ENCODE measurements at regions of chr6 and their contacts with region 1.

Region 1: GRCh38 chr6:136365776-136366354 is 76.2 kb upstream of the BCLAF1 start:
- DNase-seq: peak; percentile 86

Region 2: GRCh38 chr6:136226027-136226673 is 139.7 kb before region 1 on chr6:
- intact Hi-C with region 1: no loop called
- DNase-seq: no peak

Region 3: DNA sequence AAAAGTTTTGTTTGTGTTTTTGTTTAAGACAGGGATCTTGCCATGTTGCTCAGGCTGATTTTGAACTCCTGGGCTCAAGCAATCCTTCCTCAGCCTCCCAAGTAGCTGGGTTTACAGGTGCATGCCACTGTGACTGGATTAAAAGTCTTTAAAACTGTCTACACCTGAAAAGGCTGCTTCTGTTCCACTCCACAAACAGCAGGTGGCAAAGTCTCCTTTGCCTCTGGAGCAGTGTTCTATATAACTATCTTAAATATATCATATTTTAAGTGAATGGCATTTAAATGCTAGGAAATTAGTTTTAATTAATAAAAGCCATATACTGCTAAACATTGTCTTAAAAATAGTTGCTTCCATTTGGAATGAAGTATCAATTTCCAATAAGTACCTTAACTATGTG is 13.0 kb after region 1 on chr6:
- intact Hi-C with region 1: loop called in 1 of 2 experiments (anchors 1 kb)
- DNase-seq: no peak

Region 4: DNA sequence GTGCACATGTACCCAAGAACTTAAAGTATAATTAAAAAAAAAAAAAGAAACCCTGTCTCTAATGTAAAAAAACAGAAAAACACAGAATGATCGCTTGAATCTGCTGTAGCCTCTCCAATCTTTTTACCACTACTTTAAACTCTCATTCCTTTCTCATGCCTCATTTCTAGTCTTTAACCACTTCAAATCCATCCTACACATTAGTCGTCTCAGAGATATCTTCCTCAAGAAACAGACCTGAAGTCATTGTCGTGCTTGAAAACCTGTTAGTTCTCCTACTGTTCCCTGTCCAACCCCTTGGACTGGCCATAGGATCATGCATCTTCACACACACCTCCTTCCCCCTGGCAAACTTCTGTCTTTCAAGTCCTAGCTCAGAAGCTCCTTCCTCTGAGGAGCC is 35.9 kb after region 1 on chr6:
- intact Hi-C with region 1: no loop called
- DNase-seq: no peak